GM12878 (cell line): ENCODE measurements at regions of chr14 and their contacts with region 1.

Region 1: GRCh38 chr14:22314181-22314820 is 274.7 kb downstream of the DAD1 start:
- DNase-seq: peak; percentile 48
- ATAC-seq: peak; percentile 98
- H3K4me3 ChIP-seq: no peak overlapping the region
- H3K27ac ChIP-seq: no peak overlapping the region
- H3K4me1 ChIP-seq: no peaks in the 10 kb centered on the region
- H3K27me3 ChIP-seq: no peaks in the 10 kb centered on the region
- CTCF ChIP-seq: peak; percentile 55 to 80 (median 69); a peak in 5 of 6 replicates
- EP300 ChIP-seq: no peak
- POLR2A ChIP-seq: no peak
- RAD21 ChIP-seq: peak; percentile 75

Region 2: GRCh38 chr14:22163051-22163450 is 151.2 kb before region 1 on chr14:
- CTCF ChIA-PET with region 1: interaction called, 11 read pairs
- POLR2A ChIA-PET with region 1: no interaction called
- RAD21 ChIA-PET with region 1: interaction called, 8 read pairs
- SMC1A ChIA-PET with region 1: interaction called, 10 read pairs
- in situ Hi-C with region 1: no loop called
- intact Hi-C with region 1: loop called (anchors 10 kb)
- DNase-seq: no peak
- ATAC-seq: peak; percentile 64
- H3K4me3 ChIP-seq: no peak overlapping the region
- H3K27ac ChIP-seq: no peak overlapping the region
- H3K4me1 ChIP-seq: no peaks in the 10 kb centered on the region
- H3K27me3 ChIP-seq: peaks cover 2% of the 10 kb centered on the region in 2 experiments; a peak in 2 of 4 replicates
- CTCF ChIP-seq: peak in 2 of 3 experiments; percentile 3 to 28; a peak in 3 of 6 replicates
- EP300 ChIP-seq: no peak
- POLR2A ChIP-seq: no peak
- RAD21 ChIP-seq: peak; percentile 40

Region 3: GRCh38 chr14:22303589-22304195 is 10.6 kb before region 1 on chr14:
- CTCF ChIA-PET with region 1: interaction called, 42 read pairs
- POLR2A ChIA-PET with region 1: interaction called, 4 read pairs
- RAD21 ChIA-PET with region 1: interaction called, 7 read pairs
- SMC1A ChIA-PET with region 1: interaction called, 36 read pairs
- in situ Hi-C with region 1: no loop called
- intact Hi-C with region 1: no loop called
- DNase-seq: no peak
- ATAC-seq: no peak
- H3K4me3 ChIP-seq: no peak overlapping the region
- H3K27ac ChIP-seq: no peak overlapping the region
- H3K4me1 ChIP-seq: no peaks in the 10 kb centered on the region
- H3K27me3 ChIP-seq: 0 out of 4 replicates have a peak, but pooled peaks cover 0 to 5% of the 10 kb centered on the region in 2 experiments
- CTCF ChIP-seq: peak; percentile 39 to 48 (median 44); a peak in 4 of 6 replicates
- EP300 ChIP-seq: no peak
- POLR2A ChIP-seq: no peak
- RAD21 ChIP-seq: peak; percentile 61